AG04450 (cell line): ENCODE measurements at regions of chr13 and their contacts with region 1.

Region 1: DNA sequence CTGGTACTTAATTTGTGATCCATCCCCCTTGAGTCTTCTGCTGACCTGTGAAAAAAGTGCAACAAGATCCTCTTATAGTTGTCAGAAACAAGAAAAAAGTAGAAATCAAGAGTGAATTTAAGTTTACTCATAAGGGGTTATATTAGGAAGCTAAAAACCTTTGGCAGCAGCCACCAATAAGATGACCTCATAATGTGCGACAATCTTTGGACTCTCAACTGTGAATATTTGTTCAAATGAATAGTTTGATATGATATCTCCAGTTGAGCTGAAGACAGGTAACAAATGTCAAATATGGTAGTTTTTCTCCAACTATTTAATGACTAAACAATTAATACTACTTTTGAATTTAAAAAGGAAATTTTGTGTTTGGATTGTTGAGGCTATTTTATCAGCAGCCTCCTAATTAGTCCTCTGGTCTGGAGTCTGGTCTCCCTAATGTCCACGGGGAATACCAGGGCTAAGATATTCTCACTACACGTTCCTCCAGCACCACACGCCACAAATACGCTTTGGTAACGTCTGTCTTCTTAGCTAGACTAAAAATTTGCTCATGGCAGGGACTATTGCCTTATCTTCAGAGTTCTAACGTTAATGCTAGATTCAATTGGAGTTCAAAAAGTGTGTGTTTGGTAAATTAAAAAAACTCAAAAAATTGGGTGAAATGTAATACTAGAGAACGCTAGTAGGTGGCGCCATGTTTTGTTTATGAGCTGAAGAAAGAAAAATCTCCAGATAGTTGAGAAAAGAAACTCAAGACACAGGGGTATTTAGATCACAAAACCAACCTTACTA is 51.0 kb upstream of the PDX1 start:
- DNase-seq: no peak
- H3K4me3 ChIP-seq: no peak overlapping the region
- H3K27ac ChIP-seq: no peak overlapping the region
- H3K27me3 ChIP-seq: peaks cover 2% of the 10 kb centered on the region
- CTCF ChIP-seq: peak; percentile 64

Region 2: DNA sequence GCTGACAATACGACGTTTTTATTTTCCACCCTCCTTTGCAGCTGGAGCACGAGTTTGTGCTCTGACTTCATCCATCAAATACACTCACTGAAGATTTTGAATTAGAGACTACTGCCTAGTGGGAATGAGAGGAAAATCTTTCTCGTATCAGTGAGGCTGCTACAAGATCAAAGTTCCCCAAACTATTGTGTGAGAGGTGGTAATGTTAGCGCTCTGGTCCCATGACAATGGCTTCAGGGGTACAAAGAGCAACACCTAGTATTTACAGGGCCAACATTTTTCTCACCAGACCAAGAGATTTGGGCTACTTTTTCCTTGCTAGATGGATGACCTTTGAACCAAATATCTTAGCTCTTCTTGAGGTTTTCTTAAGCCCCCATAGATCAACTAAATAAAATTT is 20.6 kb after region 1 on chr13:
- CTCF ChIA-PET with region 1: interaction called, 16 read pairs
- POLR2A ChIA-PET with region 1: no interaction called
- DNase-seq: no peak
- H3K4me3 ChIP-seq: no peak overlapping the region
- H3K27ac ChIP-seq: no peak overlapping the region
- H3K27me3 ChIP-seq: no peaks in the 10 kb centered on the region
- CTCF ChIP-seq: no peak

Region 3: GRCh38 chr13:27953676-27954405 is 85.0 kb after region 1 on chr13:
- CTCF ChIA-PET with region 1: interaction called, 41 read pairs
- POLR2A ChIA-PET with region 1: no interaction called
- DNase-seq: peak; percentile 10
- H3K4me3 ChIP-seq: peak overlapping the region; percentile 53
- H3K27ac ChIP-seq: no peak overlapping the region
- H3K27me3 ChIP-seq: peaks cover 51% of the 10 kb centered on the region
- CTCF ChIP-seq: peak; percentile 73

Region 4: DNA sequence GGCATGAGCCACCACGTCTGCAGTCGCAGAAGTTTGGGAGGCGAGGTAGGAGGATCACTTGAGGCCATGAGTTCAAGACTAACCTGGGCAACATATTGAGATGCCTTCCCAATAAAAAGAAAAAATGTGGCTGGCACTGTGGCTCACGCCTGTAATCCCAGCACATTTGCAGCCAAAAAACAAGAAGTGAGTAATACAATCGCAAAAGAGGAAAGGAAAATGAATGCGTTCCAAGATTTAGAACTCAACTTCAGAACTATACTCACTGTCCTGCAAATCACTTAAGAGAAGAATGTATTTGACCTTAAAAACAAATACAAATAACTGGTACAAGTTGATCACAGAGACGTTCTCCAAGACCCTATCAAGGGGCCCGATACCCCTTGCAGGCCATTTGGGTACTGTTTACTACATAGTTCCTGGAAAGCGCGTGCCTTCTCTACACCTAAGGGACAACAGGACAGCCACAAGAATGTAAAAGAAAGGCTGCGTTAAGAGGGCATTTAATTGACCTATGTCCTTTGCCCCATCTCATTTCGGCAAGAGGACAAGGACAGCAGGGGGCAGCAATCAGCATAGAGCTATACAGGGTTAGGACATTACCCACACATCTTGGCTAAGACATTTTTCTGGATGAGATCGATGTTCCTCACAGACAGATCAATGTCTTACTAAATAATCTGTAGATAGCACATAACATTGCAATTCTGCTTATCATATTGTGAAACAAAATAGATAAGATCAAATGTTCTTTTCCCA is 190.2 kb after region 1 on chr13:
- CTCF ChIA-PET with region 1: no interaction called
- POLR2A ChIA-PET with region 1: no interaction called
- DNase-seq: no peak
- H3K4me3 ChIP-seq: no peak overlapping the region
- H3K27ac ChIP-seq: no peak overlapping the region
- H3K27me3 ChIP-seq: peaks cover 2% of the 10 kb centered on the region
- CTCF ChIP-seq: peak; percentile 29